ENCODE measurements at regions of chr16 and their contacts with region 1.

Region 1: GRCh38 chr16:67816240-67817031 is 9.7 kb downstream of the TSNAXIP1 start:
- DNase-seq: peak; percentile 90
- H3K4me3 Mint-ChIP-seq: no peak overlapping the region
- H3K27ac Mint-ChIP-seq: no peak overlapping the region
- H3K4me1 Mint-ChIP-seq: peaks cover 7% of the 10 kb centered on the region
- H3K27me3 Mint-ChIP-seq: no peaks in the 10 kb centered on the region

Region 2: GRCh38 chr16:67521095-67521804 is 295.2 kb before region 1 on chr16:
- CTCF ChIA-PET with region 1: interaction called, 12 read pairs
- POLR2A ChIA-PET with region 1: no interaction called
- DNase-seq: peak; percentile 98
- H3K4me3 Mint-ChIP-seq: peak overlapping the region; percentile 75
- H3K27ac Mint-ChIP-seq: peak overlapping the region; percentile 93
- H3K4me1 Mint-ChIP-seq: peaks cover 45% of the 10 kb centered on the region
- H3K27me3 Mint-ChIP-seq: peaks cover 22% of the 10 kb centered on the region

Region 3: GRCh38 chr16:67800338-67800926 is 16.0 kb before region 1 on chr16:
- CTCF ChIA-PET with region 1: interaction called, 26 read pairs
- POLR2A ChIA-PET with region 1: no interaction called
- DNase-seq: no peak
- H3K4me3 Mint-ChIP-seq: no peak overlapping the region
- H3K27ac Mint-ChIP-seq: peak overlapping the region; percentile 87
- H3K4me1 Mint-ChIP-seq: peaks cover 59% of the 10 kb centered on the region
- H3K27me3 Mint-ChIP-seq: no peaks in the 10 kb centered on the region

Region 4: DNA sequence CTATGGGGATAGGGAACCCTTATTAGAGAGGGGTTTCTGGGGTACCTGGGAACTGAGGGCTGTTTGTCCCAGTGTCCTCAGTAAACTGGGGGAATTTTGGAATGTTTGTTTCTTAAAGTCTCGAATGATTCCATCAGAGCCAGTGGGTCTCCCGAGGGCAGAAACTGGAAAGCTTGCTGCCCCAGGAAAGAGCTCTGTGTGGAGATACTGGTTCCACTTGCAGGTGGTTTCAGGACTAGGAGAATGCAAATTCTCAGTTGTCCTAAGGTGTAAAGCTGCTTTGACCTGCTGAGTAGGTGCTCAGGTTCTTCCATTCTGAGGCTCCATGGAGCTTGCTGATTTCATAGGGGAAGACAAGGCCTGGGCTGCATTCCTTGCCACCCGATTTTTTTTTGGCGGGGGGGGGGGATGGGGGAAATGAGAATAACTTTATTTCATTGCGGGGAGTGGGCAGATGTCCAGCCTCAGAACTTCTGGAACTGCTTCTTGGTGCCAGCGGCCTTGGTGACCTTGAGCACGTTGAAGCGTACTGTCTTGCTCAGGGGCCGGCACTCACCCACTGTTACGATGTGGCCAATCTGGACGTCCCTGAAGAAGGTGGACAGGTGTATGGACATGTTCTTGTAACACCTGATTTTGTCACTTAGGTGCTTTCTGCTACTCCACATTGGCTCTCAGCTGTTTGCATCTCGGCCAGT is 39.2 kb after region 1 on chr16:
- CTCF ChIA-PET with region 1: interaction called, 10 read pairs
- POLR2A ChIA-PET with region 1: no interaction called
- DNase-seq: no peak
- H3K4me3 Mint-ChIP-seq: no peak overlapping the region
- H3K27ac Mint-ChIP-seq: no peak overlapping the region
- H3K4me1 Mint-ChIP-seq: peaks cover 19% of the 10 kb centered on the region
- H3K27me3 Mint-ChIP-seq: no peaks in the 10 kb centered on the region

Region 5: DNA sequence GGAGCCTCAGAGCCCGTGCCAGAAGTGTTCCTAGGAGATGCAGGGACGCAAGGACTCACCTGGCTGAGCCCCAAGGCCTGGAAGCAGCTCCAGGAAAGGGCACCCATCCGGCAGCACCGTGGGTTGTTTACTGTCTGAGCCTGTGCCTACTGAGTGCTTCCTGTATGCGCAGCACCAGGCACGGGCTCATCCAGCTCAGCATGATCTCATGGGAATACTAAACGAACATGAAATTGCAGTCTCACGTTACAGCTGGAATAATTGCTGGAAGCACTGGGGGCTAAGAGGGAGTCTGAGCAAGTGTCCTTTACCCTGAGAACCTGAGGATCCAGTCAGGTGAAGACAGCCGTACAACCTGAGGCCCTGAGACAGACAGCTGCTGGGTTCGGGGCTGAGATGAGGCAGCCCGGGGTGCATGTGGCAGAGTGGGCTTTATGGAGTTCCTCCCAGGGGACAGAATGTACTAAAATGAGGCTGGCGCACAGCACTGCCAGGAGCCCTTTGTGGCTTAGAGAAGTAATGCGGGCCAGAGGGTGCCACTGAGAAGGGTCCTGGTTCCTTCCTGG is 109.8 kb after region 1 on chr16:
- CTCF ChIA-PET with region 1: interaction called, 13 read pairs
- POLR2A ChIA-PET with region 1: no interaction called
- DNase-seq: no peak
- H3K4me3 Mint-ChIP-seq: no peak overlapping the region
- H3K27ac Mint-ChIP-seq: no peak overlapping the region
- H3K4me1 Mint-ChIP-seq: peaks cover 6% of the 10 kb centered on the region
- H3K27me3 Mint-ChIP-seq: no peaks in the 10 kb centered on the region

Region 6: DNA sequence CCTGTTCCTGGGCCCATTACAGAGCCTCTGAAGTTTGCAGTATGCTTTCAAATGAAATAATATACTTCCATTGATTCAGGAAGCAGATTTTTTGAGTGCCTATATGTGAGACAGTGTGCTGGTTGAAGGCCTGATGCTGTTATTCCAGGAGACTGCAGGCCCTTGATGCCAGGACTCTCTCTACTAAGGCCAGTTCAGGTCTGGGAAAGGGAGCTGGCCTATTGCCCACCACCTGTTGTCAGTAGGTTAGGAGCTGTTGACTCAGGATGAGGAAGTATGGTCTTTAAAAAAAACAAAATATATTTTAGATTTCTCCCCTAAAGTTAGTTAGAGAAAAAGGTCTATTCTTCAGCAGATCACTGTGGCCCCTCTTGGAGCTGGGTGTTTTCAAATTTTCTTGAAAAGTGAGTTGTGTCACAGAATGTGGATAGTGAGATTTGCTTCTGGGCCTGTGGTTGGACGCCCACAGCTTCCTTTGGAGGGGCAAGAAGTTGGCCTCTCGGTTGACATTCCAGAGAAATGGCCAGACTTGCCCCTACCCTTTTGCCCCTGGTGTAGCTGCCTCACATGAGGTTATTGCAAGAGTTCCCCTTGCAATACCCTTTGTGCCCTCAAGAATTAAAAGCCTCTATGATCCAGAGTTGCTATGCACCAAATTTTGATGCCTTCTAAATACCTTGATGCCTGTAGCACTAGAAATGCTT is 411.6 kb after region 1 on chr16:
- CTCF ChIA-PET with region 1: interaction called, 10 read pairs
- POLR2A ChIA-PET with region 1: no interaction called
- DNase-seq: no peak
- H3K4me3 Mint-ChIP-seq: no peak overlapping the region
- H3K27ac Mint-ChIP-seq: peak overlapping the region; percentile 84
- H3K4me1 Mint-ChIP-seq: peaks cover 42% of the 10 kb centered on the region
- H3K27me3 Mint-ChIP-seq: no peaks in the 10 kb centered on the region

Measured in activated CD4-positive, alpha-beta T cell treated with anti-CD3 and anti-CD28 coated beads, Interleukin-2, amount 10 ng/mL, durations not matched to agents 7 days and 5 days (primary cell).